CD8-positive, alpha-beta T cell (primary cell): ENCODE measurements at regions of chr2 and their contacts with region 1.

Region 1: DNA sequence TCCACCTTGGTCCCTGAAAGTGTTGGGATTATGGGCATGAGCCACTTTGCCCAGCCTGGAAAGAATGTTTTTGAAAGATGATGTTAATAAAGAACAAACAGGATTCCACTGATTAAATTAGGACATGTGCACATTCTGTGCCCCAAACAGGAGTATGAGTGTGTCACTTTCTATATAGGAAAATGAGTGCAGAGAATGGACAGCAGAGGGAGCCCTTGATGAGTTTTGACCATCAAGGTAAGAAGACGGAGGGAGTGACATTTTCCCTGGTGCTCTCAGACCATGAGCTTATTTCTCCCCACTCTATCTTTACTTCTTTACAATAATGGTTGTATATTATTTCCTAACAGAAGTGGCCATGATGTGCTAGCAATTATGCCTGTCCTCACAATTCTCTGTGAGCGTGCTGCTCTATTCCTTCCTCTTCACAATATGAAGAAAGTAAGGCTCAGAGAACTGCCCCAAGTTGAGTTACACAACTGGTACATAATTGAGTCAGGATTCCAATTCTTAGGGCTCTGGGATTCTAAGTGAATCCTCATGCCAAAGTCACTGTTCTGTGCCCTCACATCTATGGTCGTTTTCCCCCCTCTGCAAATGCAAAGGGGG is 20.6 kb downstream of the RPL37A start:
- DNase-seq: peak in 8 of 9 experiments; percentile 20 to 77 (median 48)
- ATAC-seq: peak; percentile 51
- H3K4me3 ChIP-seq: no peak overlapping the region
- H3K4me3 Mint-ChIP-seq: no peak overlapping the region
- H3K27ac ChIP-seq: no peak overlapping the region
- H3K27ac Mint-ChIP-seq: no peak overlapping the region
- H3K4me1 ChIP-seq: no peaks in the 10 kb centered on the region
- H3K4me1 Mint-ChIP-seq: no peaks in the 10 kb centered on the region
- H3K27me3 ChIP-seq: no peaks in the 10 kb centered on the region
- H3K27me3 Mint-ChIP-seq: no peaks in the 10 kb centered on the region
- CTCF ChIP-seq: peak; percentile 72

Region 2: GRCh38 chr2:216445501-216445900 is 73.8 kb before region 1 on chr2:
- CTCF ChIA-PET with region 1: no interaction called
- POLR2A ChIA-PET with region 1: no interaction called
- intact Hi-C with region 1: no loop called
- DNase-seq: no peak
- ATAC-seq: no peak
- H3K4me3 ChIP-seq: no peak overlapping the region
- H3K4me3 Mint-ChIP-seq: no peak overlapping the region
- H3K27ac ChIP-seq: no peak overlapping the region
- H3K27ac Mint-ChIP-seq: no peak overlapping the region
- H3K4me1 ChIP-seq: no peaks in the 10 kb centered on the region
- H3K4me1 Mint-ChIP-seq: no peaks in the 10 kb centered on the region
- H3K27me3 ChIP-seq: no peaks in the 10 kb centered on the region
- H3K27me3 Mint-ChIP-seq: no peaks in the 10 kb centered on the region
- CTCF ChIP-seq: no peak

Region 3: DNA sequence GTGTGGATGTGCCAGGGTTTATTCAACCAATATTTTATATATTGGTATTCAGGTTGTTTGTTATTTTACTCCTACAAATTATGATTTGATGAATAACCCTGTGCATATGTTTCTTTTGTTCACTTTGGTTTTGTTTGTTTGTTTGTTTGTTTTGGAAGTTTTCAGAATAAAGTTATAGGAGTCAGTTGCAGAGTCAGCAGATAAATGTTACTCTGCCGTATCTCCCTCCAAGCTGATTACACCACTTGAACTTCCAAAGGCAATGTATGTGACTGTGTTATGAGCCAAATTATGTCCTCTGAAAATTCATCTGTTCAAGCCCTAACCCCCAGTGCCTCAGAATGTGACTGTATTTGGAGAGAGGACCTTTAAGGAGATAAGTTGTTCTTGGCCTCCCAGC is 986.0 kb after region 1 on chr2:
- CTCF ChIA-PET with region 1: no interaction called
- POLR2A ChIA-PET with region 1: no interaction called
- intact Hi-C with region 1: loop called in 1 of 2 experiments (anchors 5 kb)
- DNase-seq: no peak
- ATAC-seq: no peak
- H3K4me3 ChIP-seq: no peak overlapping the region
- H3K4me3 Mint-ChIP-seq: no peak overlapping the region
- H3K27ac ChIP-seq: no peak overlapping the region
- H3K27ac Mint-ChIP-seq: no peak overlapping the region
- H3K4me1 ChIP-seq: no peaks in the 10 kb centered on the region
- H3K4me1 Mint-ChIP-seq: no peaks in the 10 kb centered on the region
- H3K27me3 ChIP-seq: no peaks in the 10 kb centered on the region
- H3K27me3 Mint-ChIP-seq: peaks cover 3% of the 10 kb centered on the region
- CTCF ChIP-seq: no peak